Dorsolateral prefrontal cortex (tissue), 120 donors: ENCODE measurements at regions of chr20 and their contacts with region 1.

Region 1: DNA sequence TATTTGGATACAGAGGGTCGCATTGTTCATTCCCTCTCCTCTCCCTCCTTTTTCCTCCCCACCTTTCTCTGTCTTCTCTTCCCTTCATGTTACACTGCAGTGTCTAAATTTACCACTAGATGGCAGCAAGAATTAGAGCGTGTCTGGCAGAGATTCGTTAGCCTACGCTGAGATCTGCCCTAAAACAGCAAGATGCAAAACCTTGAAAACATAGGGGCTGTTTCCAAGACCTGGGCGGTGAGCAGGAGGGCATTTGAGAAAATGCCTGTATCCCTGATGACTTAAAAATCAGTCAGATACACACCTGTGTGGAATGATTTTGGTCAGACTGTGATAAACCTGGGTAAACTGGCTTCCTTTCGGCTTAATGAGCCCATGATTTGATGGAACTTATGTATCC is 101.5 kb upstream of the ISM1 start:
- DNase-seq: peak in 2 of 10 donors; percentile 28 to 35
- H3K4me3 ChIP-seq: no peak overlapping the region
- H3K27ac ChIP-seq: no peak overlapping the region
- H3K27me3 ChIP-seq: peaks cover 0 to 6% (median 0%) of the 10 kb centered on the region in 45 donors
- CTCF ChIP-seq: peak; percentile 61 to 96 (median 86)

Region 2: DNA sequence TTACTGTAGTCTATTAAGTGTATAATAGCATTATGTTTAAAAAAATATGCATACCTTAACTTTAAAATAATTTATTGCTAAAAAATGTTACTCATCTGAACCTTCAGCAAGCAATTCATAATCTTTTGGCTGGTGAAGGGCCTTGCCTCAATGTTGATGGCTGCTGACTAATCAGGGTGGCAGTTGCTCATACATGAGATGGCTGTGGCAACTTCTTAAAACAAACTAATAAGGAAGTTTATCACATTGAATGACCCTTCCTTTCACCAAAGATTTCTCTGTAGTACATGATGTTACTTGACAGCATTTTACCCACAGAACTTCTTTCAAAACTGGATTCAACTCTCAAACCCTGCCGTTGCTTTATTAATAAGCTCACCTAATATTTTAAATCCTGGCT is 435.1 kb after region 1 on chr20:
- intact Hi-C with region 1: loop called in 1 of 2 experiments (anchors 10 kb)
- DNase-seq: no peak
- H3K4me3 ChIP-seq: no peak overlapping the region
- H3K27ac ChIP-seq: no peak overlapping the region
- H3K27me3 ChIP-seq: no peaks in the 10 kb centered on the region
- CTCF ChIP-seq: no peak

Region 3: DNA sequence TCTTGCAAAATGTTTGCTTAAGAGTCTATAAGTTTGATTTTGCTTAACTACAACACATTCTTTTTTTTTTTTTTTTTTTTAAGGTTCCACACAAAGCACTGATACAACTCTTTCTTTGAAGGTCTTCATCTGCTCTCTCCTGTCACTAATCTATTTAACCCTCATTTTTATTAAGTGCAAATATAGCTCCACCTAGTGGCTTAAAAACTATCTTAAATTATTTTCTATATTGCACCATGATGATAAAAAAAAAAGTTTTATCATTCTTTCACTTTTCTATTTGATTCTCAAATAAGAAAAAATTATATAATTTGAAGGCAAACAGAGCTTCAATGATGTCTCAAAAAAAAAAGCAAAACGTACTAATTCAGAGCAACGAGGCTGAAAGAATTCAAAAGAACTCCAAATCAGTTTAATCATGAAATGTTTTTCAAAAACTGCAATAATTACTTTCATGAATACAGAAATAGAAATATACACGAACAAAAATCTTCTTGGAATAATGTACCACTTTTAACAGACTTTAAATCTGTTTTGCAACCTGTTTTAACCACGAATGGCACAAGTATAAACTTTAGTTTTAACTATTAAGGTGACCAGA is 652.4 kb after region 1 on chr20:
- intact Hi-C with region 1: loop called (anchors 10 kb)
- DNase-seq: no peak
- H3K4me3 ChIP-seq: no peak overlapping the region
- H3K27ac ChIP-seq: no peak overlapping the region
- H3K27me3 ChIP-seq: no peaks in the 10 kb centered on the region
- CTCF ChIP-seq: peak in 55 of 56 donors; percentile 32 to 77 (median 59)

Region 4: GRCh38 chr20:14055127-14055742 is 935.7 kb after region 1 on chr20:
- intact Hi-C with region 1: loop called in 1 of 2 experiments (anchors 5 kb)
- DNase-seq: peak in 1 of 10 donors; percentile 17
- H3K4me3 ChIP-seq: no peak overlapping the region
- H3K27ac ChIP-seq: no peak overlapping the region
- H3K27me3 ChIP-seq: no peaks in the 10 kb centered on the region
- CTCF ChIP-seq: peak; percentile 45 to 87 (median 73)